Activated CD8-positive, alpha-beta memory T cell treated with anti-CD3 and anti-CD28 coated beads, Interleukin-2, amount 10 ng/mL, durations not matched to agents 7 days and 5 days (primary cell): ENCODE measurements at regions of chr9 and their contacts with region 1.

Region 1: DNA sequence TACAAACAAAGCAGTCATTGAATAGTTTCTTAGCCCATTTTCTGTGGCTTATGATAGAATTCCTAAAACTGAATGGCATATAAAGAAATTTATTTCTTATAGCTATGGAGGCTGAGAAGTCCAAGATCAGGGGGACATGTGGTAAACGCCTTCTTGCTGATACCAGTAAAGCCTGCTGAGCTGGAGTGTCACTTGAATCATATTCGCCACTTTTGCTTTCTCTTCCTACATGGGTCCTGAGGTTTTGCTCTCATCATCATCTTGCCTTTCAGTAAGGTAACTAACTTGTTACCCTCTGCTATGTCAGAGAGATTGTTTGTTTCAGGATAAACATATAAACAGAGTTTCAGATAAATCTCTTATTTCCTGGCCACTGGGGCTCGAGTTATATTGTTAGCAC is 203.3 kb upstream of the DMRT1 start:
- DNase-seq: no peak
- ATAC-seq: peak; percentile 84
- H3K4me3 Mint-ChIP-seq: no peak overlapping the region
- H3K27ac Mint-ChIP-seq: peak overlapping the region; percentile 35
- H3K4me1 Mint-ChIP-seq: peaks cover 20% of the 10 kb centered on the region
- H3K27me3 Mint-ChIP-seq: no peaks in the 10 kb centered on the region

Region 2: GRCh38 chr9:649128-650074 is 11.2 kb after region 1 on chr9:
- CTCF ChIA-PET with region 1: interaction called, 10 read pairs
- DNase-seq: no peak
- ATAC-seq: no peak
- H3K4me3 Mint-ChIP-seq: no peak overlapping the region
- H3K27ac Mint-ChIP-seq: no peak overlapping the region
- H3K4me1 Mint-ChIP-seq: peaks cover 35% of the 10 kb centered on the region
- H3K27me3 Mint-ChIP-seq: no peaks in the 10 kb centered on the region